ENCODE measurements at regions of chr9 and their contacts with region 1.

Region 1: DNA sequence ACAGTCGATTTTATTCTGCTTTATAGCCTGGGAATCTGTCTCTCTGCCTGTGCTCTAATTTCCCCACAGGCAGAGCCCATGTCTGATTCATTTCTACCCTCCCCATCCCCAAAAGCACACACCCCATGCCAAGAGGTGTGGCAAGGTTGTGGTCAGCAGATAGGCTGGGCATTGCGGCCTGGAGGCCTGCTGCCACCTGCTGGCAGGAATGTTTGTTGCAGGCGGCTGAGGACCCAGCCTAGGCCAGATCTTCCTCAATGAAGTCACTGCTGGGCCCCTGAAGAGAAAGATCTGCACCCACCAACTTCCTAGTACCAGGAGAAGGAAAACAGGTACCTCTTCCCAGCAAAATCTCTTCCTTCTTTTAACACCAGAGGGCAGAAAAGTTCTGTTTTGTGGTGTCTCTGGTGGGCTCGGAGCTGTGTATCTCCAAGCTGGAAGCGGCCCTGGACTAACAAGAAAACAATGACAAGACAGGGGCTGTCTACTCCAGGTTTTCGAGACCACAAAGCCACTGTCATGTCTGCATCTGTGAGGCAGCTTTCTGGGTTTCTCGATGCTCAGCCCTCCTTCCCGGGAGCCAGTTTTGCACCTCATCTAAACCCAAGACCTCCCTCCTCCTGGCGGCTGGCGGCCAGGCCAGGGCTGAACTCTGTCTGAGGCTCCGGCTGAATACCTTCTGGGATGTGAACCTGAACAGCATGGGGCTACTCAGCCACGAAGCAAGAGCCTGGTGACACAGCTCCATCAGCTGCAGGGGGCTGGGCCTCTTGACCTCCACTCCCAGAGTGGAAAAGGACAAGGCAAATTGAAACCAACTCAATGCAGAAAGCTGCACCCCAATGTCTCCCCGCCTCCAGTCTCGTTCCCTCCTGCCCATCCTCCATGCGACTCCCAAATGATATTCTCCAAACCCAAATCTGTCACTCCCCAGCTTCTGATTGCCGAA is 4.9 kb downstream of the ANKS6 start:
- DNase-seq: peak; percentile 80
- H3K4me3 ChIP-seq: no peak overlapping the region
- H3K27ac ChIP-seq: peak overlapping the region; percentile 21
- H3K27me3 ChIP-seq: no peaks in the 10 kb centered on the region
- CTCF ChIP-seq: peak; percentile 96

Region 2: GRCh38 chr9:98807070-98807810 is 15.8 kb after region 1 on chr9 and contains the start of gene GALNT12:
- CTCF ChIA-PET with region 1: interaction called, 15 read pairs
- POLR2A ChIA-PET with region 1: no interaction called
- DNase-seq: no peak
- H3K4me3 ChIP-seq: peak within 1 kb of the TSS; percentile 66
- H3K27ac ChIP-seq: no peak within 1 kb of the TSS
- H3K27me3 ChIP-seq: peaks cover 19% of the 10 kb centered on the region
- CTCF ChIP-seq: no peak
- polyA plus RNA-seq, gene GALNT12: 2.8 and 4.2 TPM in 2 replicates

Measured in AG04450 (cell line).